ENCODE measurements at regions of chr20 and their contacts with region 1.

Region 1: GRCh38 chr20:6767536-6768227 is at the start of gene BMP2:
- DNase-seq: peak in 1 of 2 donors; percentile 25
- ATAC-seq: peak; percentile 73 to 74
- H3K4me3 ChIP-seq: peak within 1 kb of the TSS; percentile 60 to 75 (median 69)
- H3K27ac ChIP-seq: peak within 1 kb of the TSS; percentile 53 to 71 (median 60)
- H3K4me1 ChIP-seq: peaks cover 0 to 15% of the 10 kb centered on the region in 2 donors
- H3K27me3 ChIP-seq: peaks cover 3 to 16% (median 15%) of the 10 kb centered on the region in 3 donors
- CTCF ChIP-seq: no peak
- POLR2A ChIP-seq: peak; percentile 12 to 26
- total RNA-seq, gene BMP2: 1.6 to 4.3 (median 2.9) TPM

Region 2: GRCh38 chr20:6636209-6637159 is 131.2 kb before region 1 on chr20:
- in situ Hi-C with region 1: no loop called
- intact Hi-C with region 1: loop called (anchors 10 kb)
- DNase-seq: peak in 1 of 2 donors; percentile 14
- ATAC-seq: peak; percentile 73 to 75
- H3K4me3 ChIP-seq: no peak overlapping the region
- H3K27ac ChIP-seq: peak overlapping the region in 3 of 4 donors; percentile 3 to 26 (median 7)
- H3K4me1 ChIP-seq: no peaks in the 10 kb centered on the region
- H3K27me3 ChIP-seq: no peaks in the 10 kb centered on the region
- CTCF ChIP-seq: peak in 3 of 5 experiments; percentile 18 to 41 (median 30)
- POLR2A ChIP-seq: no peak

Region 3: GRCh38 chr20:6732001-6732447 is 35.7 kb before region 1 on chr20:
- in situ Hi-C with region 1: no loop called
- intact Hi-C with region 1: no loop called
- DNase-seq: peak; percentile 36 to 62
- ATAC-seq: peak; percentile 71 to 73
- H3K4me3 ChIP-seq: no peak overlapping the region
- H3K27ac ChIP-seq: peak overlapping the region; percentile 12 to 57 (median 50)
- H3K4me1 ChIP-seq: peaks cover 0 to 4% of the 10 kb centered on the region in 2 donors
- H3K27me3 ChIP-seq: no peaks in the 10 kb centered on the region
- CTCF ChIP-seq: no peak
- POLR2A ChIP-seq: no peak

Region 4: GRCh38 chr20:7285918-7286556 is 518.4 kb after region 1 on chr20:
- in situ Hi-C with region 1: loop called in 3 of 4 experiments (anchors 25 kb)
- intact Hi-C with region 1: loop called (anchors 5 kb)
- DNase-seq: peak; percentile 31 to 52
- ATAC-seq: peak; percentile 30 to 83
- H3K4me3 ChIP-seq: no peak overlapping the region
- H3K27ac ChIP-seq: no peak overlapping the region
- H3K4me1 ChIP-seq: no peaks in the 10 kb centered on the region
- H3K27me3 ChIP-seq: no peaks in the 10 kb centered on the region
- CTCF ChIP-seq: peak; percentile 43 to 77 (median 60)
- POLR2A ChIP-seq: no peak

Region 5: GRCh38 chr20:7859356-7859802 is 1091.7 kb after region 1 on chr20:
- in situ Hi-C with region 1: no loop called
- intact Hi-C with region 1: loop called (anchors 10 kb)
- DNase-seq: no peak
- ATAC-seq: peak in 1 of 2 donors; percentile 68
- H3K4me3 ChIP-seq: no peak overlapping the region
- H3K27ac ChIP-seq: no peak overlapping the region
- H3K4me1 ChIP-seq: no peaks in the 10 kb centered on the region
- H3K27me3 ChIP-seq: no peaks in the 10 kb centered on the region
- CTCF ChIP-seq: peak in 2 of 5 experiments; percentile 26 to 43
- POLR2A ChIP-seq: no peak

Measured in gastrocnemius medialis (tissue), 4 donors.